Natural killer cell (primary cell): ENCODE measurements at regions of chr3 and their contacts with region 1.

Region 1: DNA sequence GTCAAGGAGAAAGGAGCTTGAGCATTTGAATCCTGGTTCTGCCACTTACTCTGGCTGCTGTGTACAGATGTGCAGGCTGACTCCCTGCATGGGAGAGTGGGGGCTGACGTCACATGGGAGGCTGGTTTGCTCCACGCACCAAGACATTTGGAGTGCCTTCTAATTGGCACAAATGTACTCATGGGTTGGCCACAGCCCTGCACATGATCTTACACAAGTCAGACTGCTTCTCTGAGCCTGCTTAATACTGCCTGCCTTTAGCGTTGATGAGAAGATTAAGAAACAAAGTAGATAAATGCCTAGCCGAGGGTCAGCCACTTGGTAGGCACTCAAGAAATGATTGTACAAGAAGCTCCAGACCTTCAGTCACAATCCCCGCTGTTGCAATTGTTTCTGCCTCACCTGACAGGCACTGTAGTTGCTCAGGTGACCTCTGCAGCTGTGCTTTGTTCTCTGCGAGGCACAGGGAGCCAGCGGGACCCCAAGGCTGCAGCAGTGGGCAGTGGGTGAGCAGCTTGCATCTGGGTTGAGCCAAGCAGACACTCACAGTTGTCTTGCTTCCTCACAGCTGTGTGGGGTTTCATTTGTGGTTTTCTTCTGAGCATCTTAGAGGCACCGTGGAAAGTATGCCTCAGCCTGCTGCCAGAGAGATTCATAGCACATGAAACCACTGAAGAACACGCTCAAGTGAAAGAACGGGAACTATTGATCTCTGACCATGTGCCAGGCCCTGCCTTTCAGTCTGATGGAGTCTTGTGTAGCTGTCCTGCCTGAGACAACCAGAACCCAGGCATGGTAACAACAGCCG is 33.1 kb downstream of the GRK7 start:
- DNase-seq: peak; percentile 24 to 78
- ATAC-seq: peak; percentile 72 to 83 (median 81)
- H3K4me3 ChIP-seq: no peak overlapping the region
- H3K4me3 Mint-ChIP-seq: peak overlapping the region; percentile 88
- H3K27ac ChIP-seq: peak overlapping the region; percentile 88
- H3K27ac Mint-ChIP-seq: peak overlapping the region; percentile 95
- H3K4me1 ChIP-seq: peaks cover 53% of the 10 kb centered on the region
- H3K4me1 Mint-ChIP-seq: peaks cover 52 to 58% of the 10 kb centered on the region in 2 donors
- H3K27me3 ChIP-seq: no peaks in the 10 kb centered on the region
- H3K27me3 Mint-ChIP-seq: no peaks in the 10 kb centered on the region
- CTCF ChIP-seq: no peak

Region 2: DNA sequence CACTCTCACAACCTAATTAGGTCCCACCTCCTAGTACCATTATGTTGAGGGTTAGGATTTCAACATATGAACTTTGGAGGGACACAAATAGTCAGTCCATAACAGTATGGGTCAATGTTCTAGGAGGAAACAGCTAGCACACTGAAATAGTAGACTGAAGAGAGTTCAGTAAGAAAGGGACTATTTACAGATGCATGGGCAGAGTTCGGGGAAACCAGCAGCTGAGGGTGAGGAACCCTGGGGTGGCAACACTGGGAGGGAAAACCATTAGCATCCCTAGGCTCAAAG is 642.7 kb before region 1 on chr3:
- intact Hi-C with region 1: no loop called
- DNase-seq: no peak
- ATAC-seq: no peak
- H3K4me3 ChIP-seq: no peak overlapping the region
- H3K4me3 Mint-ChIP-seq: no peak overlapping the region
- H3K27ac ChIP-seq: no peak overlapping the region
- H3K27ac Mint-ChIP-seq: no peak overlapping the region
- H3K4me1 ChIP-seq: no peaks in the 10 kb centered on the region
- H3K4me1 Mint-ChIP-seq: no peaks in the 10 kb centered on the region
- H3K27me3 ChIP-seq: no peaks in the 10 kb centered on the region
- H3K27me3 Mint-ChIP-seq: peaks cover 2 to 10% of the 10 kb centered on the region in 2 donors
- CTCF ChIP-seq: no peak

Region 3: DNA sequence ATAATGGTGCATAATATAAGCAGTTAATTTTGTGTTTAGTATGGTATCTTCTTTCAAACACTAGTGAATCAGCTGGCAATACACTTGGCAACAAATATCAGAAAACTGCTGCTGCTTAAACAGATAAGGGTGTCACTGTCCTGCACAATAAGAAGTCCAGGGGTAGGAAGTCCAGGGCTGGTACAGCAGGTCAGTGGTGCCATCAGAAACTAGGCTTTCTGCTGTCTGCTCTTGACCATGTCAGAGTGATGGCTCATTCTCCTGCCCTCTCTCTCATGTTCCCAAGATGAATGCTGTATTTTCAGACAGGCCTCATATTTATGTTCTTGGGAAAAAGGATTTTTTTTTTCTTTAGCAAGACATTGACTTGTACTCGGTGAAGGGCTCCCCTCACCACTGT is 42.3 kb before region 1 on chr3:
- intact Hi-C with region 1: no loop called
- DNase-seq: no peak
- ATAC-seq: no peak
- H3K4me3 ChIP-seq: no peak overlapping the region
- H3K4me3 Mint-ChIP-seq: no peak overlapping the region
- H3K27ac ChIP-seq: no peak overlapping the region
- H3K27ac Mint-ChIP-seq: no peak overlapping the region
- H3K4me1 ChIP-seq: no peaks in the 10 kb centered on the region
- H3K4me1 Mint-ChIP-seq: no peaks in the 10 kb centered on the region
- H3K27me3 ChIP-seq: no peaks in the 10 kb centered on the region
- H3K27me3 Mint-ChIP-seq: no peaks in the 10 kb centered on the region
- CTCF ChIP-seq: no peak

Region 4: GRCh38 chr3:141845407-141846049 is 49.2 kb after region 1 on chr3:
- intact Hi-C with region 1: no loop called
- DNase-seq: peak in 1 of 2 donors; percentile 60
- ATAC-seq: peak in 2 of 3 donors; percentile 58 to 61
- H3K4me3 ChIP-seq: no peak overlapping the region
- H3K4me3 Mint-ChIP-seq: no peak overlapping the region
- H3K27ac ChIP-seq: no peak overlapping the region
- H3K27ac Mint-ChIP-seq: no peak overlapping the region
- H3K4me1 ChIP-seq: no peaks in the 10 kb centered on the region
- H3K4me1 Mint-ChIP-seq: no peaks in the 10 kb centered on the region
- H3K27me3 ChIP-seq: no peaks in the 10 kb centered on the region
- H3K27me3 Mint-ChIP-seq: no peaks in the 10 kb centered on the region
- CTCF ChIP-seq: no peak

Region 5: GRCh38 chr3:141875374-141875892 is 79.1 kb after region 1 on chr3:
- intact Hi-C with region 1: loop called (anchors 5 kb)
- DNase-seq: peak; percentile 74 to 91
- ATAC-seq: peak; percentile 63 to 81 (median 67)
- H3K4me3 ChIP-seq: peak overlapping the region; percentile 64
- H3K4me3 Mint-ChIP-seq: peak overlapping the region; percentile 96
- H3K27ac ChIP-seq: peak overlapping the region; percentile 94
- H3K27ac Mint-ChIP-seq: peak overlapping the region; percentile 81 to 95
- H3K4me1 ChIP-seq: peaks cover 6% of the 10 kb centered on the region
- H3K4me1 Mint-ChIP-seq: peaks cover 23 to 32% of the 10 kb centered on the region in 2 donors
- H3K27me3 ChIP-seq: no peaks in the 10 kb centered on the region
- H3K27me3 Mint-ChIP-seq: no peaks in the 10 kb centered on the region
- CTCF ChIP-seq: peak; percentile 85